ENCODE measurements at regions of chr2 and their contacts with region 1.

Region 1: GRCh38 chr2:200901459-200902072 is 12.4 kb downstream of the NIF3L1 start:
- DNase-seq: peak in 4 of 5 donors; percentile 57 to 90 (median 82)
- H3K4me3 ChIP-seq: no peak overlapping the region
- H3K27ac ChIP-seq: no peak overlapping the region
- H3K4me1 ChIP-seq: no peaks in the 10 kb centered on the region
- H3K27me3 ChIP-seq: no peaks in the 10 kb centered on the region
- CTCF ChIP-seq: peak; percentile 64

Region 2: GRCh38 chr2:200695191-200695590 is 206.4 kb before region 1 on chr2:
- intact Hi-C with region 1: no loop called
- DNase-seq: peak in 3 of 5 donors; percentile 19 to 45 (median 22)
- H3K4me3 ChIP-seq: no peak overlapping the region
- H3K27ac ChIP-seq: no peak overlapping the region
- H3K4me1 ChIP-seq: no peaks in the 10 kb centered on the region
- H3K27me3 ChIP-seq: no peaks in the 10 kb centered on the region
- CTCF ChIP-seq: no peak

Region 3: DNA sequence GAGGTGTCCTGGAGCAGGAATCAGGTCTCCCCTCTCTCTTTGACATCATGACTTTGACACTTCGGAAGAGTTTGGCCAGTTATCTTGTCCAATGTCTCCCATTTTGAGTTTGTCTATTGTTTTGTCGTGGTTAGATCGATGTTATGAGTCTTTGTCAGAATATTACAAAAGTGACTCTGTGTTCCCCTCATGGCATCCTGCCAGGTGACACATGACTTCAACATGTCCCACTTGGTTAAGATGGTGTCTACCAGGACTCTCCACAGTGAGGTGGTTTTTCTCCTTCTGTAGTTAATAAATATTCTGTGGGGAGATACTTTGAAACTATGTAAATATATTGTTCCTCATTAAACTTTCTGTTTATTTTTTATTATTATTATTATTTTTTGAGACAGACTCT is 166.5 kb before region 1 on chr2:
- intact Hi-C with region 1: no loop called
- DNase-seq: no peak
- H3K4me3 ChIP-seq: no peak overlapping the region
- H3K27ac ChIP-seq: no peak overlapping the region
- H3K4me1 ChIP-seq: no peaks in the 10 kb centered on the region
- H3K27me3 ChIP-seq: no peaks in the 10 kb centered on the region
- CTCF ChIP-seq: no peak

Region 4: DNA sequence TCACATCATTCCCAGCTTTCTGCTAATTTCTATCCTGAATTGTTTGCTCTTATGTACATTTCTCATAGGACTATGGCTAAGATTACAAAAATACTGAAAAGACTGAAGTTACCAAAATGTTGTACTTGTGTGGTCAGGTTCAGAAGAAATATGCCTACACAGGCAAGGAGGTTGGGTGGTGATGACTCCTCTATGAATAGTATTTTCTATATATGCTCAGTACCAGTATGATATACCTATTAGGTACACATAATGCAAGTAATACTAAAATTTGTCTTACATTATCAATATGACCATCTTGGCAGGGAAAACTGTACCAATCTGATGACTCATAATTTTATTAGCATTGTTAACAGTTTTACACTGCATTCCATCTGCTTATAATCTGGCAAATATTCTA is 74.1 kb after region 1 on chr2:
- intact Hi-C with region 1: no loop called
- DNase-seq: no peak
- H3K4me3 ChIP-seq: no peak overlapping the region
- H3K27ac ChIP-seq: no peak overlapping the region
- H3K4me1 ChIP-seq: no peaks in the 10 kb centered on the region
- H3K27me3 ChIP-seq: no peaks in the 10 kb centered on the region
- CTCF ChIP-seq: no peak

Region 5: GRCh38 chr2:201171259-201171814 is 269.8 kb after region 1 on chr2:
- intact Hi-C with region 1: loop called (anchors 10 kb)
- DNase-seq: no peak
- H3K4me3 ChIP-seq: no peak overlapping the region
- H3K27ac ChIP-seq: no peak overlapping the region
- H3K4me1 ChIP-seq: peaks cover 0 to 2% (median 0%) of the 10 kb centered on the region in 3 donors
- H3K27me3 ChIP-seq: no peaks in the 10 kb centered on the region
- CTCF ChIP-seq: no peak

Measured in kidney (tissue), 22 donors.